Heart left ventricle (tissue), 16 donors: ENCODE measurements at regions of chr15 and their contacts with region 1.

Region 1: DNA sequence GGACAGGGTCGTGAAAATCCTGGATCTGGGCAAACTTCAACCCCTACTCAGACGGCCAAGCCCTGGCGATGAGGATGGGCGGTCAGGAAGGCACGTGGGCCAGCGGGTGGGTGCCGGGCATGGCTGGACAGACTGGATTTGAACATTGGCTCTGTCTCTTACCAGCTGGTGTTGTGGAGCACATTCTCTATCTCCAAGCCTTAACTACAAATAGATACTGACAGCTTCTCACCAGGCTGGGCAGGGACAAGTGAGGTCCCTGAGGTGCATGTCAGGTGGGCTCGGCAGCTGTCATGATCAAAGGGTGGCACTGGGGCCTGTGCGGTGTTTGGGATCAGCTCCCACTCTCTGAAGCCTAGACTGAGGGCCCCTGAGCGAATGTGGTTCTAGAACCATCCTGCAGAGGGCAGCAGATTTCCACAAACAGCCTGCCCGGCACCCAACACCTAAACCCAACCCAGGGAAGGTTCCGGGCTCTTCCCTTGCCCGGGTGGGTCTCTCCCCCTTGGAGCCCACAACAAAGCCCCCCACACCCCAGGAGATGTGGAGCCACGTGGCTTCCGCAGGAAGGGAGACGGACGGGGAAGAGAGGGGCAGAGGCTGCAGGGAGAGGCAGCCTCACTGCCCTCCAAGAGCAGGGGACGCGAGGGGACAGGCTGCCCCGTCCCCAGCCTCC is 58.4 kb downstream of the RGMA start:
- DNase-seq: peak in 4 of 5 donors; percentile 67 to 75 (median 68)
- ATAC-seq: peak; percentile 34 to 72 (median 63)
- H3K4me3 ChIP-seq: no peak overlapping the region
- H3K27ac ChIP-seq: peak overlapping the region in 10 of 12 donors; percentile 25 to 96 (median 83)
- H3K4me1 ChIP-seq: peaks cover 0 to 55% (median 44%) of the 10 kb centered on the region in 12 donors
- H3K27me3 ChIP-seq: no peaks in the 10 kb centered on the region
- CTCF ChIP-seq: peak; percentile 79 to 92 (median 86)
- POLR2A ChIP-seq: no peak

Region 2: DNA sequence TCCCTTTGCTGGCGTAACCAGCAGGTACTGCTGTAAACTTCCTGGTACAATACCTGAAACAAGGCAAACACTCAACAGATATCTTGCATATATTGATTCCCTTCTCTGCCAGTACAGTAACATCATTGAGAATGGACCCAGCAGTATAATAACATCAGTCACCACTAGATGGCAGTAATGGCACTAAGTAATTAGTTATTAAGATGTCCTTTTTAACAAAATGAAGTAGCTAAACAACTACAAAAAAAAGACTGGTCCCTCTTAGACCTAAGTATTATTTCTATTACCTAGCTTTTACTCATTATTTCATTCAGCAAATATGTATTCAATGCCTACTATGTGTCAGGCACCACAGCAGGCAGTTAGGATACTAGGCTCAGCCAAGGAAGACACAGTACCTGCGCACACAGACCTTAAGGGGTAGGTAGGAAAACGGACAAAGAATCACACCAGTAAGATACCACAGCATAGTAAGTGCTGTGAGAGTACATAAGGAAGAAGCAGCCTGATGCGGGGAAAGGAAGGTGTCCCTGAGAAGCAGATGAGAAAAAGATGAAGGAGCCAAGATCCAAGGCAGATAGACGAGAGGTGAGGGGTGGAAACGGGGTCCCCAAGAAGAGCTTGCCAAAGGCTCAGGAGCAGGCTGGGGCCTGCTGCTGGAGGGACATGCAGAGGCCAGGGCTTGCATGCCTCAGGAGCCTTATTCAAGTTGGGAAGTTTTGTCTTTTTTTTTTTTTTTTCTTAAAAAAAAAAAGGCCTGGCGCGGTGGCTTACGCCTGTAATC is 233.2 kb before region 1 on chr15:
- intact Hi-C with region 1: loop called in 1 of 10 experiments (anchors 10 kb)
- DNase-seq: no peak
- ATAC-seq: peak in 3 of 4 donors; percentile 60 to 71 (median 62)
- H3K4me3 ChIP-seq: no peak overlapping the region
- H3K27ac ChIP-seq: peak overlapping the region in 5 of 12 donors; percentile 4 to 40 (median 35)
- H3K4me1 ChIP-seq: peaks cover 0 to 17% (median 5%) of the 10 kb centered on the region in 12 donors
- H3K27me3 ChIP-seq: no peaks in the 10 kb centered on the region
- CTCF ChIP-seq: peak; percentile 71 to 87 (median 78)
- POLR2A ChIP-seq: no peak

Region 3: GRCh38 chr15:93331545-93332167 is 301.1 kb after region 1 on chr15:
- intact Hi-C with region 1: loop called in 1 of 10 experiments (anchors 10 kb)
- DNase-seq: no peak
- ATAC-seq: no peak
- H3K4me3 ChIP-seq: no peak overlapping the region
- H3K27ac ChIP-seq: peak overlapping the region in 1 of 12 donors; percentile 32
- H3K4me1 ChIP-seq: peaks cover 0 to 3% (median 0%) of the 10 kb centered on the region in 12 donors
- H3K27me3 ChIP-seq: peaks cover 0 to 45% (median 11%) of the 10 kb centered on the region in 9 donors
- CTCF ChIP-seq: no peak
- POLR2A ChIP-seq: no peak

Region 4: DNA sequence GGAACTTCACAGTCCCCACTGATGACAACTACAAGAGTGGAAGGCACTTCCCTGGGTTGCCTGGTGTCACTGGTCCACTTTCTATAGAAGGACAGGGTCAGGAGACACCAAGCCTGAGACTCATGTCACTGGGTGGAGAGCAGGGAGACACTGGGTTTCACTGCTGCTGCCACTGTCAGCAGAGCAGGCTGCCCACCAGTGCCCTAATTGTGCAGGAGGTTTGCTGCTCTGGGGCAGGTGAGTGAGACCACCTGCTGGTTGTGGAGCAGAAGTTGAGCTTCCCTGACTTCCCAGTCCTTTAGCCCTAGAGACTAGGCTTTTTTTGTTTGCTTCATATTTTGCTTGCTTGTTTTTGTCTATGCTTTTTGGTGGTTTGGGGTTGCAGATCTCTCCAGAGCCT is 586.9 kb after region 1 on chr15:
- intact Hi-C with region 1: loop called in 3 of 10 experiments (anchors 5 to 10 kb)
- DNase-seq: peak in 2 of 5 donors; percentile 18 to 30
- ATAC-seq: peak in 2 of 4 donors; percentile 27 to 61
- H3K4me3 ChIP-seq: no peak overlapping the region
- H3K27ac ChIP-seq: no peak overlapping the region
- H3K4me1 ChIP-seq: peaks cover 0 to 13% (median 0%) of the 10 kb centered on the region in 12 donors
- H3K27me3 ChIP-seq: peaks cover 0 to 5% (median 0%) of the 10 kb centered on the region in 9 donors
- CTCF ChIP-seq: peak in 3 of 12 donors; percentile 9 to 18 (median 10)
- POLR2A ChIP-seq: no peak

Region 5: DNA sequence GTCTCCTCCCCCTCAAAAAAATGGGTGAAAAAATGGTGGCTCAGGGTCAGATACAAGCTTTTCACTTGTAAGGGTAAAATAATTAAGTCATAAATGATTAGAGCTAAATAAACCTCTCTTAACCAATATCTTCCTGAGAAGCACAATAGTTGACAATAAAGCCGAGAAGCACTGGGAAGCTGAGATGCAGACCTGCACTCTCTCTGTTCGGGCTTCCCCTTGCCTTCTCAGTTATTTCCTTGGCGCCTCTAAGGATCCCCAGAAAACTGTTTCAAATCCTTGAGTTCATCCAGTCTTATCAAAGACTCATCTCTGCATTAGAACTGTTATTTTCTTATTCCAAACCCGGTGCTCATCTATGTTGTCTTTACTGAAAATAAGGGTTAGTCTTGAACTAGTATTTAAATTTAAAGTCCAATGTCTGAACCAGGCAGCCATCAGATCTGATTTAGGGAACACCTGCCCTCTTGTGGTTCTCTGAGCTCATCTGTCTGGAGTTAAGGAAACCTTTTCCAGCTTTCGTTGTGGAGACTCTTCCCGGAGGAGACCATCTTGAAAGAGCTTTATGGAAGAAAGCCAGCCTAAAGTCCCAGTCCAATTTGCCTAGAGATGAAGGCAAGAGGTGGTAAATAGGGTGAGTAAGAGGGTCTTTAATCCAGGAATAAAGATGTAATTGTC is 944.4 kb after region 1 on chr15:
- intact Hi-C with region 1: loop called in 5 of 10 experiments (anchors 5 to 10 kb)
- DNase-seq: no peak
- ATAC-seq: peak in 2 of 4 donors; percentile 45 to 66
- H3K4me3 ChIP-seq: no peak overlapping the region
- H3K27ac ChIP-seq: no peak overlapping the region
- H3K4me1 ChIP-seq: peaks cover 0 to 4% (median 0%) of the 10 kb centered on the region in 12 donors
- H3K27me3 ChIP-seq: no peaks in the 10 kb centered on the region
- CTCF ChIP-seq: peak in 11 of 12 donors; percentile 18 to 51 (median 36)
- POLR2A ChIP-seq: no peak

Region 6: DNA sequence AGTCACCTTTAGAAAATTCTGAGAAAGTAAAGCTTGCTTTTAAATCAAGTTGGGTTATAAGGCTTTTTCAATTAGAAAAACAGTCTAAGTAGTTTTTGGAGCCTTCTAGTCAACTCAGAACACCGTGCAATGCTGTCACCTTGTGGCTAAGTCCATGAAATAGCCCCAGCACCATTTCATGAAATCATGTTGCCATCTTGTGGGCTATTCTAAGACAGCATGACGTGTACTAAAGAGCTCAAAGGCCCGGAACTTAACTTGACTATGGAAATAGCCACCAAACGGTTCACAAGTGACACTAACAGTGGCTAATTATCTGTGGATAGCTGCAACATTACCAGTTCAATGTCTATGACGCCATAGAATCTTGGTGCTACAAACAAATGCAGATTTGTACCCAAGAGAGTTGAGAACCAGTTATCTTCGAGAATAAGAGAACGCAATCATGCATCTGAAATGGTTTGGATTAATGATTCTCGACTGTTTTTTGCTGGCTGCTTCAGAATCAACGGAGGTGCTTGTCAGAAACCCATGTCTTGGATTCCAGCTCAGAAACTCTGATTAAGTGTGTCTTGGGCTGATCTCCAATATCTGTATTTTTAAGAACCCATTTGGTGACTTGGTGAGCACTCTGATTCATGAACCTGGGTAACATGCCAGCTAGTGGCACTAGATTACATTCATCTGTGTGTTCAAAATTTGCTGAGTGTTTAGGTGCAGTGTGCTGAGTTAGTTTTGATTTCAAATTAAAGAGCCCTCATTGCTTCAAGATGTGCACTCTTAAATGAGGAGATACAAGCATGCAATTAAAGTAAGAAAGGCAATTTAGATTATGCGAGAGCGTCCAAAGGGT is 1089.6 kb after region 1 on chr15:
- intact Hi-C with region 1: loop called (anchors 1 to 5 kb)
- DNase-seq: peak in 4 of 5 donors; percentile 43 to 65 (median 54)
- ATAC-seq: peak; percentile 90 to 98 (median 96)
- H3K4me3 ChIP-seq: no peak overlapping the region
- H3K27ac ChIP-seq: peak overlapping the region in 11 of 12 donors; percentile 20 to 72 (median 60)
- H3K4me1 ChIP-seq: peaks cover 0 to 7% (median 0%) of the 10 kb centered on the region in 12 donors
- H3K27me3 ChIP-seq: no peaks in the 10 kb centered on the region
- CTCF ChIP-seq: peak; percentile 65 to 94 (median 86)
- POLR2A ChIP-seq: no peak